ENCODE measurements at regions of chr1 and their contacts with region 1.

Region 1: DNA sequence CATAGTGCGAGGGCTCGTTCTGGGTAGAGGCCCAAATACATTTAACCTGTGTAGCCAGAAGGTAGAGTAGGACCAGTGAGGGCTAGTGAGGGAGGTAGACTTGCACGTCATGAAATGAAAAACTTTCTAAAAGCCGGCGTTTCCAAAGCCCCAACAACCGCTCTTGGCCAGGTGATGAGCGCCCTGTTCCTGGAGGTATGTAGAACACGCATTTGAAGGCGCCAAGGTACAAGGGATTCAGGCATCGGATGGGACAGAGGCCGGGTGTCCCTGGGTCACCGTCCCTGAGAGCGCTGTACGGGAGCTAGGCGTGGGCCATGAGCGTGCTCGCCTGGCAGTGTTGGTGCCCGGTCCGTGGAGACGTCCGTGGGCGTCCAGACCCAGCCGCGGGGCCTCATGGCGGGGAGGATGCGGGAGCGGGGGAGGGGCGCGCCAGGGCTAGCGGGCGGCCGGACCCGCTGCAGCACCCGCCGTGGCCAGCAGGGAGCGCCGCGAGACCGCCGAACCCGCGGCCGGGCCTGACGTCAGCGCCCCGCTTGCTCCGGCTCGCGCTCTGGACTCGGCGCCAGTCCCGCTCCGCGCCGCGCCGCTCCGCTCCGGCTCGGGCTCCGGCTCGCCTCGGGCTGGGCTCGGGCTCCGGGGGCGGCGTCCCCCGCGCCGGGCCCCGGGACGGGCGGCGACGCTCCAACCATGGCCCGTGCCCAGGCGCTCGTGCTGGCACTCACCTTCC is at the start of gene PTPRU:
- DNase-seq: peak; percentile 59 to 87 (median 78)
- H3K4me3 ChIP-seq: peak within 1 kb of the TSS in 2 of 4 donors; percentile 15 to 51
- H3K27ac ChIP-seq: peak within 1 kb of the TSS in 2 of 5 donors; percentile 34 to 74
- H3K4me1 ChIP-seq: peaks cover 0 to 9% of the 10 kb centered on the region in 2 donors
- H3K27me3 ChIP-seq: peaks cover 6% of the 10 kb centered on the region
- CTCF ChIP-seq: peak in 5 of 6 experiments; percentile 13 to 99 (median 87)
- POLR2A ChIP-seq: peak in 1 of 2 donors; percentile 10
- total RNA-seq, gene PTPRU: 1.9 to 14.4 (median 7.0) TPM

Region 2: GRCh38 chr1:29444782-29445729 is 208.9 kb after region 1 on chr1:
- intact Hi-C with region 1: no loop called
- DNase-seq: peak in 2 of 7 donors; percentile 1 to 35
- H3K4me3 ChIP-seq: no peak overlapping the region
- H3K27ac ChIP-seq: no peak overlapping the region
- H3K4me1 ChIP-seq: no peaks in the 10 kb centered on the region
- H3K27me3 ChIP-seq: peaks cover 7% of the 10 kb centered on the region
- CTCF ChIP-seq: no peak
- POLR2A ChIP-seq: no peak

Region 3: DNA sequence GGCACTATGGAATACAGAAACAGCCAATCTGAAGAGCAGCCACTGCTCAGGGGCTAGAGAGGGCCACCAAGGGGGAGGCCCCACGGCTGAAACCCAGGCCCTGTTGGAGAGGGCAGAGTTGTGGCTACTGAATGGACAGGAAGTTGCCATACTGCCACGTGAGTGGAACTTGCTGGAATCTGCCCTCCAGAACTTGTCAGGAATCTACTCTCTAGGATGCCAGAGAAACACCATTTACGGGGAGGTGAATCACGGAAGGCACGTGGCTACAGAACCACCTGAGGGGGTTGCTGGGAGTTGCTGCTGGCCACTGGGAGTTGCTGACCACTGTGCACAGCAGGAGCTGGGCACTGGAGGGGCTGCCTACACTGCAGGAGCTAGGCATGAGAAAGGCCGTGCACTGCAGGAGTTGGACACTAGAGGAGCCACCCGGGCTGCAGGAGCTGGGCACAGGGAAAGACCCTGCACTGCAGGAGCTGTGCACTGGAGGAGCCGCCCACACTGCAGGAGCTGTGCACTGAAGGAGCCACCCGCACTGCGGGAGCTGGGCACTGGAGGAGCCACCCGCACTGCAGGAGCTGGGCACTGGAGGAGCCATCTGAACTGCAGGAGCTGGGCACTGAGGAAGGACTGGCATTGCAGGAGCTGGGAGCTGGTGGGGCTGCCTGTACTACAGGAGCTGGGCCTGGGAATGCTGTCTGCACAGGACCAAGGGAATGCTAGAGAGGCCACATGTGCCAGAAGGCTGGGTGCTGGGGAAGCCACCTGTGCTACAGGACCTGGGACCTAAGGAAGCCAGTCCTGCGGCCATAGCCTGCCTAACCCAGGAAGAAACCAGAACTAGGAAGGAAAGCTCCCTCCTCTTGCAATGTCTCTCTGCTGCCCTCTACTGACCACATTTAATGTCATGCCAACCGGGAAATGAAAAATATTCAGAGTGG is 1143.8 kb after region 1 on chr1:
- intact Hi-C with region 1: loop called in 1 of 2 experiments (anchors 5 kb)
- DNase-seq: peak; percentile 41 to 75 (median 66)
- H3K4me3 ChIP-seq: no peak overlapping the region
- H3K27ac ChIP-seq: no peak overlapping the region
- H3K4me1 ChIP-seq: no peaks in the 10 kb centered on the region
- H3K27me3 ChIP-seq: peaks cover 4% of the 10 kb centered on the region
- CTCF ChIP-seq: peak; percentile 73 to 90 (median 80)
- POLR2A ChIP-seq: no peak

Region 4: DNA sequence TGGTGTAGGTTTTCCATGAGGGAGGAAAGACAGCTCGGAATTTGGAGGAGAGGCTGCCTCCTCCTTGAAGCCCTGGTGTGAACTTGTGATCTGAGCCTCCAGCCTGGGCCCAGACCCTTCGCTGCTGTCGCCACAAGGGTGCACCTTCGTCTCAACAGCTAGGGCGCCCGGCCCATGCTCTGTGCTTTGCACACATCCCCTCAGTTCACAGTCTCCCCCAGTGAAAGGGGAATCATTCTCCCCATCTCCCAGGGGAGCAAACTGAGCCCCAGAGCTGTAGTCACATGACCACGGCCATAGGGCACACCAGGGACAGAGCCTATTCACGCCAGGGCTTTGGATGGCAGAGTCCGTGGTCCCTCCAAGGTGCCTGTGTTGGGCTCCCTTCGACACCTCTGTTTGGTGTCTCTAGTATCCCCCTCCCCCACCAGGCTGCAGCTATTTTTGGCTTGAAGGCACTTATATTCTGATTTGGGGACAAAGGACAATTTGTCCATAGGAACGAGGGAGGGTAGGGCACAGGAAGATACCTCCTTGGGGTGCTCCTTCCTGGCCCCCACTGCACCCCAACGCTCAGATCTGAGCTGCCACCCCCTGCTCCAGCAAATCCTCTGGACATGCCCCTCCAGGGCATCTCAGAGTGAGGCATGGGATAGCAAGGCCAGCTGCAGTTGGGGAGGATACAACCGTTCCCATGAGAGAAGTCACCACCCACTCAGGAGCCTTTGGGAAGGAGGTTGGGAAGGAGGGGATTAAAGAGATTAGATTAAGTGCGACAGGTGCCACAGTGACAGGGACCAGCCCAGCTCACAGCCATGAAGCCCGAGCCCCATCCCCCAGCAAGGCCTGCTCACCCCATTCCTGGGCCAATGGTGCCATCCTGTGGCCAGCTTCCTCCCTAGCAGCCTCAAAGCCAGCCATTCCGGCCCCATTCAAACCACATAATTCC is 1471.6 kb after region 1 on chr1:
- intact Hi-C with region 1: loop called in 1 of 2 experiments (anchors 2 kb)
- DNase-seq: peak; percentile 68 to 91 (median 80)
- H3K4me3 ChIP-seq: no peak overlapping the region
- H3K27ac ChIP-seq: no peak overlapping the region
- H3K4me1 ChIP-seq: peaks cover 0 to 5% of the 10 kb centered on the region in 2 donors
- H3K27me3 ChIP-seq: no peaks in the 10 kb centered on the region
- CTCF ChIP-seq: peak; percentile 67 to 98 (median 94)
- POLR2A ChIP-seq: no peak

Measured in adrenal gland (tissue), 19 donors.